MCF 10A (cell line): ENCODE measurements at regions of chr14 and their contacts with region 1.

Region 1: GRCh38 chr14:68795597-68796417 is 2.9 kb upstream of the ZFP36L1 start:
- DNase-seq: peak; percentile 81
- H3K4me3 Mint-ChIP-seq: peak overlapping the region; percentile 98
- H3K27ac Mint-ChIP-seq: peak overlapping the region; percentile 97
- H3K4me1 Mint-ChIP-seq: peaks cover 15% of the 10 kb centered on the region
- H3K27me3 Mint-ChIP-seq: no peaks in the 10 kb centered on the region
- CTCF ChIP-seq: peak; percentile 72

Region 2: DNA sequence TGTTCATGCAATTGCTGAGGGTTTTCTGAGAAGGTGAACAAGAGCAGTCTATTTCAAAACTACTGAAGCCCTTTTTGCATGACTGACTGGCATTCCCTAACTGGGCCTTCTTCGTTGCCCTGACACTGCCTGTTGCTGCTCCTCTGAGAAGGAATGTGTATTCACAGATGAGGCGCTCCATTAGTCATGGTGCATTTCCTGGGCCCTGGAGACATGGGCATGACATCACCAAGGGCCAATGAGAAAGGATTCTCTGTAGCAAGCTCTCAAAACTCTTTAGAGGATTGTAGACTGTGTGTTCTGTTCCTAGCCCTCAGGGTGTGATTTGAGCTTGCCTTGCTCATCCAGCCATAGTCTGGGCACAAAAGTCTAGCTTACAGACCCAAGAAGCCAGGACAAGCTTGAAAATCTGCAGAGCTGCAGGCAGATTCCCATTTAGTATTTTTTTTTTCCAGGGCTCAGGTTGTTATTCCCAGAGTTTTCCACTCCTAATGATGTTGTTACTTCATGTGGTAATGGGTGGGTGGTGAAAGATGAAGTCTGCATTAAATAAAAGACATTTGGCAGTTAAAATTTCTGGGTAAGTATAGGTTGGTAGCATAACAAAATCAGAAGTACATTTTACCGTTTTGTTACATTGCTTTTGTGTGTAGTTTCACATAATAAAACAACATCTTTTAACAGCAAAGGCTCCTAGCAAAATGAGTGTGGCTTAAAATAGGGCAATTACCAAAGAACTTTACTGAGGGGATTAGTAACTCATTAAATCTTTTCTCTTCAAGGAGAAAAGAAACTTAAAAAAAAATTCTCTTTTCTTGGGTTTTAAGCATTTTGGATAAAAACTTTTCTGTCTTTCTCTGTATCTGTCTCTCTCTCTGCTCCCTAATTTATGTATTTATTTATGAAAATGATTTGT is 657.8 kb before region 1 on chr14:
- CTCF ChIA-PET with region 1: no interaction called
- POLR2A ChIA-PET with region 1: interaction called, 19 read pairs
- intact Hi-C with region 1: loop called (anchors 5 kb)
- DNase-seq: peak; percentile 98
- H3K4me3 Mint-ChIP-seq: peak overlapping the region; percentile 16
- H3K27ac Mint-ChIP-seq: peak overlapping the region; percentile 94
- H3K4me1 Mint-ChIP-seq: peaks cover 50% of the 10 kb centered on the region
- H3K27me3 Mint-ChIP-seq: no peaks in the 10 kb centered on the region
- CTCF ChIP-seq: no peak

Region 3: DNA sequence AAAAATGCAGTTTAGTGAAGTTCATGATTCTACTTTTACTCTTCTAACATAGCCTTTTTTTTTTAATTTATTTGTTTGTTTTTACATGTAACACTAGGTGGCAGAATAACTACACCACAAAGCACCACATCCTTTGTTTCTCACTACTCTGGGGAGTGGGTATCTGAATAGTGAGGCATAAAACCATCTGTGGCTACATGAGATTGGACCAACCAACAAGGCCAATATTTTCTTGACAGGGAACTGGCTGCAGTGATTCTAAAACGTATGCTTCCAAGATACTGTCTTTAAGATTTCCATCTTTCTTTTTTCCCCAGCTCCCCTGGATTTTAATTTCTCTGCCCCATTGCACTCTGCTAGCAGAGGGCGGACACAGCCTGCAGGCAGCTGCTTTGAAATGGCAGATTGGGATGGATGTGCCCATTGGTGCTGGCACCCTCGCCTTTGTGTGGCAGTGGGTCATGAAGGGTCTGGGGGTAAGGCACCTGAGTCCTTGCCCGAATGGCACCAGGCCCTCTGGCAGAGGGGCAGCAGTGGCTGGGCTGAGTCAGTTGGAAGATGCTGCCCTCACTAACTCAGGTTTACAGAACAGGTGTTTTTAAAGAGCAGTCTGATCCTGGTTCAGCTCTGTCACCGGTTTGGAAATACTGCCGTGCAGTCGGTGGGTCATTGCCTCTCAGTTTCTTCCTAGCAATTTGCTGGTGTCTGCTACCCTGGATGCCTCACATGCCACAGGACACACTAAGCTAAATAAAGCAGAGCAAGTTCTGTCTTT is 547.1 kb before region 1 on chr14:
- CTCF ChIA-PET with region 1: interaction called, 72 read pairs
- POLR2A ChIA-PET with region 1: interaction called, 267 read pairs
- intact Hi-C with region 1: no loop called
- DNase-seq: peak; percentile 60
- H3K4me3 Mint-ChIP-seq: peak overlapping the region; percentile 21
- H3K27ac Mint-ChIP-seq: peak overlapping the region; percentile 80
- H3K4me1 Mint-ChIP-seq: peaks cover 57% of the 10 kb centered on the region
- H3K27me3 Mint-ChIP-seq: no peaks in the 10 kb centered on the region
- CTCF ChIP-seq: peak; percentile 67

Region 4: DNA sequence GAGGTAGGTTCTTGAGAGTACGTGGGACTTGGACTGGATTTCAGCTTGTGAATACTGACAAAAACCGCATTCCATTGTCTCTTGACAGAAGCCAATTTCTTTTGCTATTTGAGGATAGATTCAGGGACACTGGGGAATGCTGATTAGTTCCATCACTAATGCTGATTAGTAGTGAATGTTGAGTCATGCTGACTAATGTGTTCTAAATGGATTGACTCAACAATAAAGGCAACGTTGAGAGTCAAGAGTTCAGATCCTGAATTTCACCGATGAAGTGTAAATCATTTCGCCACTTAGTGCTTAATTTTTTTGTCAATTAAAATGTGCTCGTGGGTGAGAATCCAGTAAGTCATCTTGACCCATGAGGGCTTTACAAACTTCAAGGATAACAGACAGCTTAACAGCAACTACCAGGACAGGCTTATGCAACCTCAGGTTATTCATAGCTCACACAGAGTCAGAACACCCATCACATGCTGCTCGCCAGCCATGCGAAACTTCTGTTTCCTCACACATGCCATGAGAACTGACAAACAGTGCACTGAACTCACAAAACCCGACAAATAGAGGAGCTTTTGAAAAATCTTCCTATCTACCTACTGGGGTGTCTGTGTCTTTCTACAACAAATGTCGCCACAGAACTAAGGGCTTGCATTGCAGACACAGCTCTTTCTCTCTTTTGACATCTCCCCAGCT is 319.4 kb before region 1 on chr14:
- CTCF ChIA-PET with region 1: no interaction called
- POLR2A ChIA-PET with region 1: interaction called, 16 read pairs
- intact Hi-C with region 1: no loop called
- DNase-seq: peak; percentile 90
- H3K4me3 Mint-ChIP-seq: peak overlapping the region; percentile 0
- H3K27ac Mint-ChIP-seq: peak overlapping the region; percentile 92
- H3K4me1 Mint-ChIP-seq: peaks cover 42% of the 10 kb centered on the region
- H3K27me3 Mint-ChIP-seq: no peaks in the 10 kb centered on the region
- CTCF ChIP-seq: no peak

Region 5: DNA sequence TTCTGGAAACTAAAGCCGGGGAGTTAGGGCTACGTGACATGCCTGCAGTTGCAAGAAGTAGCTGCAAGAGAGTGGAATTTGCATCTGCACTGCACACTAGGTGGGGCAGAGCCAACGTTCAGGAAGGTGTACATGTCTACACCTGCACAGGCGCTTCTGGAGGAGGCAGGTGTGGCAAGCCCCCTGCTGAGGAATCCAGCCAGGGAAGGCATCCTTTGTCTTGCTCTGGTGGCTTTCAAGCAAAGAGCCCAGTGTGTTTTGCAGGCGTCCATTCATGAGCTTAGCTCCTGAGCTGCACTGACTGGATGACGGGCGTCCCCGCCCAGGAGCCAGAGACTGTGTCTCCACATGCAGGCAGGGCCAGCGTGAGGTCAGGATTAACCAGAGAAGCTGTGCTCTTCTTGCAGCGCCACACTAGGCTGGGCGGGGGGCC is 119.3 kb before region 1 on chr14:
- CTCF ChIA-PET with region 1: no interaction called
- POLR2A ChIA-PET with region 1: interaction called, 20 read pairs
- intact Hi-C with region 1: no loop called
- DNase-seq: peak; percentile 93
- H3K4me3 Mint-ChIP-seq: no peak overlapping the region
- H3K27ac Mint-ChIP-seq: peak overlapping the region; percentile 42
- H3K4me1 Mint-ChIP-seq: peaks cover 44% of the 10 kb centered on the region
- H3K27me3 Mint-ChIP-seq: no peaks in the 10 kb centered on the region
- CTCF ChIP-seq: no peak

Region 6: GRCh38 chr14:68780358-68781160 is 15.2 kb before region 1 on chr14:
- CTCF ChIA-PET with region 1: interaction called, 4 read pairs
- POLR2A ChIA-PET with region 1: interaction called, 22 read pairs
- intact Hi-C with region 1: no loop called
- DNase-seq: no peak
- H3K4me3 Mint-ChIP-seq: no peak overlapping the region
- H3K27ac Mint-ChIP-seq: peak overlapping the region; percentile 53
- H3K4me1 Mint-ChIP-seq: peaks cover 38% of the 10 kb centered on the region
- H3K27me3 Mint-ChIP-seq: no peaks in the 10 kb centered on the region
- CTCF ChIP-seq: no peak

Region 7: GRCh38 chr14:68841016-68841809 is 45.4 kb after region 1 on chr14:
- CTCF ChIA-PET with region 1: no interaction called
- POLR2A ChIA-PET with region 1: no interaction called
- intact Hi-C with region 1: no loop called
- DNase-seq: no peak
- H3K4me3 Mint-ChIP-seq: no peak overlapping the region
- H3K27ac Mint-ChIP-seq: no peak overlapping the region
- H3K4me1 Mint-ChIP-seq: peaks cover 22% of the 10 kb centered on the region
- H3K27me3 Mint-ChIP-seq: no peaks in the 10 kb centered on the region
- CTCF ChIP-seq: no peak